MCF 10A (cell line): ENCODE measurements at regions of chr14 and their contacts with region 1.

Region 1: GRCh38 chr14:23057757-23058653 is 685 bp upstream of the CDH24 start:
- DNase-seq: peak; percentile 90
- H3K4me3 Mint-ChIP-seq: peak overlapping the region; percentile 83
- H3K27ac Mint-ChIP-seq: no peak overlapping the region
- H3K4me1 Mint-ChIP-seq: peaks cover 40% of the 10 kb centered on the region
- H3K27me3 Mint-ChIP-seq: no peaks in the 10 kb centered on the region
- CTCF ChIP-seq: peak; percentile 94

Region 2: GRCh38 chr14:22822571-22823098 is 235.4 kb before region 1 on chr14:
- CTCF ChIA-PET with region 1: no interaction called
- POLR2A ChIA-PET with region 1: no interaction called
- intact Hi-C with region 1: loop called (anchors 5 kb)
- DNase-seq: peak; percentile 85
- H3K4me3 Mint-ChIP-seq: peak overlapping the region; percentile 29
- H3K27ac Mint-ChIP-seq: no peak overlapping the region
- H3K4me1 Mint-ChIP-seq: peaks cover 18% of the 10 kb centered on the region
- H3K27me3 Mint-ChIP-seq: no peaks in the 10 kb centered on the region
- CTCF ChIP-seq: peak; percentile 86

Region 3: GRCh38 chr14:22973217-22974032 is 84.6 kb before region 1 on chr14:
- CTCF ChIA-PET with region 1: interaction called, 86 read pairs
- POLR2A ChIA-PET with region 1: interaction called, 133 read pairs
- intact Hi-C with region 1: no loop called
- DNase-seq: peak; percentile 78
- H3K4me3 Mint-ChIP-seq: peak overlapping the region; percentile 50
- H3K27ac Mint-ChIP-seq: peak overlapping the region; percentile 51
- H3K4me1 Mint-ChIP-seq: peaks cover 51% of the 10 kb centered on the region
- H3K27me3 Mint-ChIP-seq: no peaks in the 10 kb centered on the region
- CTCF ChIP-seq: peak; percentile 65

Region 4: DNA sequence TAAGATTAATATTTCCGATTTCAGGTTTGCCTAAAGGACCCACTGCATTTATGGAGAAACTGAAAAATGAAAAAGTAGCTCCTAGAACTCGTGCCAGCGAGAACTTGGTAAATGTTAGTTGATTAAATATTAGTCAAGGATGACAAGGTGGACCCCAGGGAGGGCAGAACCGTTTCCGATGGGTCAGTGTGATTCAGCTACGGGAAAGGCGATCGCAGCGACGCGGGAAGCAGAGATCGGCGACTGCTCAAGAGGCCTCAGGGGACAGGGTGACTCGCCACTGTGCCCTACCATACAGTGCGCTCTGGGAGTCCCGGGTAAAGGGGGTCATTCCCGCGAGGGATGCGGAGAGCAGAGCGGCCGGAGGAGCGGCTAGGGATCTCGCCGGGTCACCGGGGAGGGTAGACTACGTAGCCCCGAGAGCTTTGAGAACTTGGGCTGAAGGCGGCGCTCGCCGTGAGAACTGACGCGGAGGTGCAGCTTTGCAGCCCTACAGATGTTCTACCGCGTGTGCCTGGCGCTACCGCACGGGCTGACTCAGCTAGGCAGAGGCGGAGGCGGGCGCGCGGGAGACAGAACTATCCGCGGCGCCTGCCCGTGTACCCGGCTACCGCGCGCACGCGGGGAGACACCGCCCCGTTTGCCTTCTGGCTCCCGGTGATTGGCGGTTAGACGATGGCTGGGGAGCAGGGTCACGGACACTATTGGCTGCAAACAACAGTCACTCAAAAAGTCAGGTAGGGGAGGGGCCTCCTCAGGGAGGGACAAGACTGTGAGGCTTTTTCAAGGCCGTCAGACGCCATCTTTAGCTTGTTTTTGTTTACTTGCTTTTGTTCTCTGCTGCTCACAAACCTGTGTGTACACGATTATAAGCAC is 51.2 kb before region 1 on chr14:
- CTCF ChIA-PET with region 1: interaction called, 620 read pairs
- POLR2A ChIA-PET with region 1: interaction called, 20 read pairs
- intact Hi-C with region 1: no loop called
- DNase-seq: peak; percentile 98
- H3K4me3 Mint-ChIP-seq: peak overlapping the region; percentile 94
- H3K27ac Mint-ChIP-seq: peak overlapping the region; percentile 99
- H3K4me1 Mint-ChIP-seq: peaks cover 38% of the 10 kb centered on the region
- H3K27me3 Mint-ChIP-seq: no peaks in the 10 kb centered on the region
- CTCF ChIP-seq: peak; percentile 15

Region 5: DNA sequence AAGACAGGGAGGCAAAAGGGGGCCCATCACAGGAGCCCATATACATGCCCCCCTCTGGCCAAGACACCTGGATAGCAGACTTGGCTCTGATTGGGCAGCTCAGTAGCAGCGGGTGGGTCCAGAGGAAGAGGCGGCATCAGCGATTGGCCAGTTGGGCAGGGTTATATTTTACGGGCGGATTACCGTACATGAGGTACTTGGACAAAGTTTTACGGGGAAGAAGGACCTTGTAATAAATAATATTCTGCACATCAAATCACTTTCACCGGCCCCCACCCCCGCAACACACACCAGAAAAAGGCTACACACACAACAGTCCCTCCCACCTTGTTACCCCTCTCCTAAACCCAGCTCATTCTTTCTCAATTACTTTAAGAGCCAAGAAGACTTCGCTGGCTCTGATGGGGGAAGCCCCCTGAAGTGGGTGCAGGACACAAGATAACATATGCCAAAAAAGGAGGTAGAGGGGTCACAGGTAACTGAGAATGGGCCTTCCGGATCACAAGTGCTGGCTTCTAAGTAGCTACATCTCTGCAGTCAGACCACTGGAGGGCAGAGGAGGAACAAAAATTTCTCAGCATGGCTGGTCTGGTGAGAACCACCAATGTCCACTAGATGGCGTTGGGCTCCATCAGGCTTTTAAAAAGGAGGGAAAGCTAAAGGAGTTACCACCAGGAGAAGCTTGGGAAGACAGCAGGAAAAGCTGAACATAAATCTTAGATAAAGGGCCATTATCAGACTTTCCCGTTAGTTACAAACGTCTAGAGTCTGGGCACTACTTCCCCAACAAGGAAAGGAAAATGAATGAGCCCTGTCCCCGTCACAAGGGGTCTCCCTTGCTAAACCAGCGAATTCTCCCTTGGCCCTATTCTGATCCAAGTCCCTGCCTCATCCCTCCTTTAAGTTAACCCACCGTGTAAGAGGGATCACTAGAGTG is 10.7 kb after region 1 on chr14:
- CTCF ChIA-PET with region 1: interaction called, 50 read pairs
- POLR2A ChIA-PET with region 1: interaction called, 14 read pairs
- intact Hi-C with region 1: no loop called
- DNase-seq: peak; percentile 93
- H3K4me3 Mint-ChIP-seq: peak overlapping the region; percentile 50
- H3K27ac Mint-ChIP-seq: no peak overlapping the region
- H3K4me1 Mint-ChIP-seq: peaks cover 26% of the 10 kb centered on the region
- H3K27me3 Mint-ChIP-seq: no peaks in the 10 kb centered on the region
- CTCF ChIP-seq: peak; percentile 94

Region 6: GRCh38 chr14:23095196-23096108 is 37.4 kb after region 1 on chr14 and contains the start of gene C14orf119:
- CTCF ChIA-PET with region 1: interaction called, 11 read pairs
- POLR2A ChIA-PET with region 1: interaction called, 13 read pairs
- intact Hi-C with region 1: no loop called
- DNase-seq: peak; percentile 100
- H3K4me3 Mint-ChIP-seq: no peak within 1 kb of the TSS
- H3K27ac Mint-ChIP-seq: no peak within 1 kb of the TSS
- H3K4me1 Mint-ChIP-seq: peaks cover 25% of the 10 kb centered on the region
- H3K27me3 Mint-ChIP-seq: no peaks in the 10 kb centered on the region
- CTCF ChIP-seq: no peak
- total RNA-seq, gene C14orf119: 39.6 and 54.8 TPM in 2 replicates

Region 7: GRCh38 chr14:23307687-23308644 is 250.0 kb after region 1 on chr14:
- CTCF ChIA-PET with region 1: no interaction called
- POLR2A ChIA-PET with region 1: no interaction called
- intact Hi-C with region 1: no loop called
- DNase-seq: peak; percentile 67
- H3K4me3 Mint-ChIP-seq: peak overlapping the region; percentile 98
- H3K27ac Mint-ChIP-seq: peak overlapping the region; percentile 88
- H3K4me1 Mint-ChIP-seq: peaks cover 26% of the 10 kb centered on the region
- H3K27me3 Mint-ChIP-seq: no peaks in the 10 kb centered on the region
- CTCF ChIP-seq: no peak